GM10248 (cell line): ENCODE measurements at regions of chr10 and their contacts with region 1.

Region 1: DNA sequence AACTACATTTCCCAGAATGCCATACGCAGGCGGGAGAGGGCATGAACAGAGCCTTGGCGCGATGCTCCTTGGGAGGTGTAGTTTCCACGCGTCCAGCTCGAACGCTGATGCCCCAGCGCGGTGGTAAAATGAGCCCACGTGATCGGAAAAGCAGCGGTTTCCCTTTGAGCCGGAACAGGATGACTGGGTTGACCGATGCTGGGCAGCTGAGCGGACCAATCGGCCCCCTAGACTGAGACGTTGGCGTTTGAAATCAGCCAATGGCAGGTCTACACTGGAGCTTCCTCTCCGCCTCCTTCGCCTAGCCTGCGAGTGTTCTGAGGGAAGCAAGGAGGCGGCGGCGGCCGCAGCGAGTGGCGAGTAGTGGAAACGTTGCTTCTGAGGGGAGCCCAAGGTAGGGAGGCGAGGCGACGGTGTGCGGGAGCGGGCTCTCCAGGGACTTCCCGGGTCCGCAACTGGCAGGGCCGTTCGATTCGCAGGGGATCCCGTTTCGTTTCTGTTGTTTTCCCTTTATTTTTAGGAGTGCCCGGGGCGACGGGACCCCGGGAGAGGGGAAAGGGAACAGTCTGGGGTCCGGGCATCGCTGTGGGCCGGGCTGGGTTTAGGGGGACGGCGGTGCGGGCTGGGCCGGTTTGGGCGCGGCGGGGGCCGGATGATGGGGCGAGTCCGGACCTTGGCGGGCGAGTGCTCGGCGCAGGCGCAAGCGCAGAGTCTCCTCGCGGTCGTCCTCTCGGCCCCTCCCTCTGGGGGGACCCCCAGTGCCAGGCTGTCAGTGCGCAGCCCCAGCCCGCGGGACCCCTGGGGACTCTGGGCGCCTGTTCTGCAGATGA is at the start of gene BUB3:
- DNase-seq: peak; percentile 97
- CTCF ChIP-seq: no peak

Region 2: GRCh38 chr10:123165445-123166072 is 11.3 kb after region 1 on chr10:
- CTCF ChIA-PET with region 1: interaction called, 22 read pairs
- POLR2A ChIA-PET with region 1: no interaction called
- DNase-seq: no peak
- CTCF ChIP-seq: peak; percentile 11

Region 3: DNA sequence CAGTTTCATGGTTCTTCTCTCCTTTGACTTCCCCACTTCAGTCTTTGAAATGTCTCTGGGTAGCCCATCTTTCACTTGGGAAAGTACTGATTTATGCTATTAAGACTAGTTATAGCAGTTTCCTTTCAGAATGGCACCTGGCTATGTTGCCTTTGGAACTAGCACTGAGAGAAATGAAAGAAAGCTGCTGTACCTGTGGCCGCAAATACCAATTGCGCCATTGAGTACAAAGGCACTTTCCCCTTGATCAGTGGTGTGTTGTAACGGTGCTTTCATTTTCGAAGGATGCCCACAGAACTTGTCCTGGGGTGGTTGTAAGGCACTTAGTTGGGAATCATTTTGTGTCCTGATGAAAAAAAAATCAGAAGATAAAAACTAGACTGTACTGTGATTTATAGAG is 16.7 kb after region 1 on chr10:
- CTCF ChIA-PET with region 1: interaction called, 22 read pairs
- POLR2A ChIA-PET with region 1: interaction called, 4 read pairs
- DNase-seq: no peak
- CTCF ChIP-seq: no peak

Region 4: DNA sequence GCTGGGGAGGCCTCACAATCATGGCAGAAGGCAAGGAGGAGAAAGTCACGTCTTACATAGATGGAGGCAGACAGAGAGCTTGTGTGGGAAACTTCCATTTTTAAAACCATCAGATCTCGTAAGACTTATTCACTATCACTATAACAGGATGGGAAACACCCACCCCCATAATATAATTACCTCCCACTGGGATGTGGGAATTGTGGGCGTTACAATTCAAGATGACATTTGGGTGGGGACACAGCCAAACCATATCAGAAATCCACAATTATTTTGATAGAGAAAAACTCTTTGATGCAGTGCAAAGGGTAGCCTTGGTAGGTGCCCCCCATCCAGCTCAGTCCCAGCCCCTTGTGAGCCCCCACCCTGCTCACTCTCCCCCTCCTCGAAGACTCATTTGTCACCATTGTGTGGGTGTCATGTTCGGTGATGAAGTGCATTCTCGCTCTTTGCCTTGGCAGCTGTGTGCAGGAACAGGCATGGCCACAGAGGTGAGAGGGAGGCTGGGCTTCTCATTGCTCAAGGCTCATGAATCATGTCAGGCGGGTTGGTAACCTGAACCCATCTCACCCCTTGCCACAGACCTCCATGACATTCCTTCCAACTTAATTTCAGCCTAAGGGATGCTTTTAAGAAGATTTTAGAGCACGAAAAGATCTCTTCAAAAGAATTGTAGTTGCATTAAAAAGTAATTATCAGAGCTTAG is 75.8 kb after region 1 on chr10:
- CTCF ChIA-PET with region 1: no interaction called
- POLR2A ChIA-PET with region 1: no interaction called
- DNase-seq: no peak
- CTCF ChIP-seq: no peak